Panc1 (cell line): ENCODE measurements at regions of chr5 and their contacts with region 1.

Region 1: DNA sequence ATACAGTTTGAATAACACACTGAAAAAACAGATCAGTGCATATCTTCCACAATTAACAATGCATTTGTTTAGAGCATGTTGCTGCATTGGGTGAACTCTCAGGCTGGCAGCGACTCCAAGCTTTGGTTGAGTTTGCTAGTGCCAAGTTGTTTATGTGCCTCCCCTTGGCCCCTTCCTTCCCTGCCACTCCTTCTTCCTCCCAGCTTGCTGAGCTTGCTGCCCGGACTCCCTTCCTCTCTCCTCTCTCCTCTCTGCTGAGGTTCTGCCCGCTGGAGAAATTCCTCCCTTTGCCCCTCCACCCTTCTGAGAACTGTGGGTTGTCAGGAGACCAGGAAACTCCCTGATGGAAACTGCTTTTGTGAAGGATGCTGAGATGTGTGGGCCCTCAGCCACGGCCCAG is 247.3 kb downstream of the PDZD2 start:
- DNase-seq: no peak
- ATAC-seq: no peak
- H3K4me3 ChIP-seq: no peak overlapping the region
- H3K27ac ChIP-seq: no peak overlapping the region
- H3K4me1 ChIP-seq: no peaks in the 10 kb centered on the region
- H3K27me3 ChIP-seq: peaks cover 3% of the 10 kb centered on the region
- CTCF ChIP-seq: no peak

Region 2: GRCh38 chr5:31664566-31664965 is 221.6 kb before region 1 on chr5:
- CTCF ChIA-PET with region 1: interaction called, 11 read pairs
- POLR2A ChIA-PET with region 1: no interaction called
- in situ Hi-C with region 1: no loop called
- intact Hi-C with region 1: no loop called
- DNase-seq: no peak
- ATAC-seq: peak; percentile 80; the same call in 1 of the 2 replicates
- H3K4me3 ChIP-seq: no peak overlapping the region
- H3K27ac ChIP-seq: no peak overlapping the region
- H3K4me1 ChIP-seq: no peaks in the 10 kb centered on the region
- H3K27me3 ChIP-seq: peaks cover 19% of the 10 kb centered on the region
- CTCF ChIP-seq: peak; percentile 66

Region 3: GRCh38 chr5:31935702-31936369 is 49.6 kb after region 1 on chr5:
- CTCF ChIA-PET with region 1: no interaction called
- POLR2A ChIA-PET with region 1: no interaction called
- in situ Hi-C with region 1: no loop called
- intact Hi-C with region 1: no loop called
- DNase-seq: no peak
- ATAC-seq: no peak
- H3K4me3 ChIP-seq: no peak overlapping the region
- H3K27ac ChIP-seq: no peak overlapping the region
- H3K4me1 ChIP-seq: no peaks in the 10 kb centered on the region
- H3K27me3 ChIP-seq: peaks cover 5% of the 10 kb centered on the region
- CTCF ChIP-seq: no peak

Region 4: GRCh38 chr5:33675958-33676464 is 1789.8 kb after region 1 on chr5:
- CTCF ChIA-PET with region 1: interaction called, 14 read pairs
- POLR2A ChIA-PET with region 1: no interaction called
- in situ Hi-C with region 1: no loop called
- intact Hi-C with region 1: no loop called
- DNase-seq: no peak
- ATAC-seq: no peak
- H3K4me3 ChIP-seq: no peak overlapping the region
- H3K27ac ChIP-seq: no peak overlapping the region
- H3K4me1 ChIP-seq: no peaks in the 10 kb centered on the region
- H3K27me3 ChIP-seq: no peaks in the 10 kb centered on the region
- CTCF ChIP-seq: no peak